ENCODE measurements at regions of chr19 and their contacts with region 1.

Region 1: GRCh38 chr19:3125900-3126524 is 9.8 kb upstream of the GNA15 start:
- DNase-seq: peak; percentile 76
- H3K4me3 Mint-ChIP-seq: no peak overlapping the region
- H3K27ac Mint-ChIP-seq: no peak overlapping the region
- H3K4me1 Mint-ChIP-seq: peaks cover 13% of the 10 kb centered on the region
- H3K27me3 Mint-ChIP-seq: peaks cover 23% of the 10 kb centered on the region

Region 2: GRCh38 chr19:3163230-3163886 is 37.3 kb after region 1 on chr19:
- CTCF ChIA-PET with region 1: interaction called, 92 read pairs
- DNase-seq: peak; percentile 81
- H3K4me3 Mint-ChIP-seq: no peak overlapping the region
- H3K27ac Mint-ChIP-seq: peak overlapping the region; percentile 61
- H3K4me1 Mint-ChIP-seq: peaks cover 51% of the 10 kb centered on the region
- H3K27me3 Mint-ChIP-seq: peaks cover 6% of the 10 kb centered on the region

Measured in activated naive CD4-positive, alpha-beta T cell treated with anti-CD3 and anti-CD28 coated beads, Interleukin-2, amount 10 ng/mL, durations not matched to agents 7 days and 5 days (primary cell).